WTC11 (cell line): ENCODE measurements at regions of chr2 and their contacts with region 1.

Region 1: DNA sequence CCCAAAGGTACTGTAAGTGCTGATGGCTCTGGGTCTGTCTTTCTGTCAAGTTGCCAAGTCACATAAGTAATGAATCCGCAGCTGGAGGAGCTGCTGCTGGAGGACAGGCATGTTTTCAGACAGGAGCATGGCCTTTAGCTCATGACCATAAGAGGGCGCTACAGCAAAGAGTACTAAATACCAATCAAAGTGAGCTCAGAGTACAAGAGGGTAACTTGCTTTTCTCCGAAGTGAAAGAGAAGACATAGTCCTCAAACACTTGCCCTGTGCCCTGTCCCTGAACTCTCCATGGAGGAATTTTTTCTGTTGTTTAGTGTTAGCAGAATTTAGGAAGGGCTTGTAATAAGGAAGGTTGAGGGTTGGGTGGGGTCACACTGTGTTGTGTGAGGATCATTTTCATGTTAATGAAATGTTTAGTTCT is 58.0 kb upstream of the EML6 start:
- DNase-seq: peak; percentile 65
- ATAC-seq: peak; percentile 94
- H3K4me3 Mint-ChIP-seq: no peak overlapping the region
- H3K27ac Mint-ChIP-seq: peak overlapping the region; percentile 76
- H3K4me1 Mint-ChIP-seq: peaks cover 9% of the 10 kb centered on the region
- H3K27me3 Mint-ChIP-seq: no peaks in the 10 kb centered on the region
- CTCF ChIP-seq: peak; percentile 74

Region 2: DNA sequence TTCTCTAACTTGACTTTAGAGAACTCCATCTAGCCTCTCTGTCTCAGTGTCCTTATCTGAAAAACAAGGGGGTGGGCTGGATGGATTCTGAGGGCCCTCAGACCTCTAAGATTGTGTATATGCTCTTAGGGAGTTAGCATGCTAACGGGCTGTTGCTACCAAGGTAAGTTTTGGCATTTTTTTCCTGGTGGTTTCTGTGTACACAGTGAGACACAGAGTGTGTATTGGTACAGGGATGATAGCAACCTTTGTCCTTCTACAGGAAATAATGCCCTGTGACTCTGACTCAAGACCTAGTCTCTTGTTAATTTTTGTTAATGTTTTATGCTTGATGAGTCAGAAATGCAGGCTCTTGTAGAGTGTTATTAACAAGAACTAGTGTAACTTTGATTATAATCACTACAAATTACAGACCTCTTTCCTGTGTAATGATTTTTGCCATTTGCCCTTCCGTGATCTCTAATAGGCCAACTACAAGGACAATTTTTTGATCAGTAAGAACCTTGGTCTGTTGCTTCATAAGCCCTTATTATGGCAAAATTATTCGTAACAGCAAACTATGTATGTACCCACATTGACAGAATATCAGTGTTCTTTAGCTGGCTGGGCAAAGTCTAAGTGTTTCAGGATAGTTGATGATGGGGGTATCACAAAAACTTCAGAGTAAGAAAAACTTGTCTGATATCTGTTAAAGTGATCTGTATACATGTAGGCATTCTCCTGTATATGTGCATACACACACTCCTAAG is 119.6 kb before region 1 on chr2:
- CTCF ChIA-PET with region 1: no interaction called
- POLR2A ChIA-PET with region 1: no interaction called
- DNase-seq: no peak
- ATAC-seq: no peak
- H3K4me3 Mint-ChIP-seq: no peak overlapping the region
- H3K27ac Mint-ChIP-seq: no peak overlapping the region
- H3K4me1 Mint-ChIP-seq: peaks cover 14% of the 10 kb centered on the region
- H3K27me3 Mint-ChIP-seq: no peaks in the 10 kb centered on the region
- CTCF ChIP-seq: no peak

Region 3: GRCh38 chr2:54558188-54559005 is 107.0 kb before region 1 on chr2:
- CTCF ChIA-PET with region 1: interaction called, 11 read pairs
- POLR2A ChIA-PET with region 1: no interaction called
- DNase-seq: peak; percentile 82
- ATAC-seq: peak; percentile 60
- H3K4me3 Mint-ChIP-seq: peak overlapping the region; percentile 91
- H3K27ac Mint-ChIP-seq: peak overlapping the region; percentile 95
- H3K4me1 Mint-ChIP-seq: peaks cover 43% of the 10 kb centered on the region
- H3K27me3 Mint-ChIP-seq: no peaks in the 10 kb centered on the region
- CTCF ChIP-seq: no peak

Region 4: GRCh38 chr2:54589340-54590215 is 75.9 kb before region 1 on chr2:
- CTCF ChIA-PET with region 1: no interaction called
- POLR2A ChIA-PET with region 1: no interaction called
- DNase-seq: no peak
- ATAC-seq: peak; percentile 50
- H3K4me3 Mint-ChIP-seq: no peak overlapping the region
- H3K27ac Mint-ChIP-seq: peak overlapping the region; percentile 16; the same call in 1 of the 2 replicates
- H3K4me1 Mint-ChIP-seq: peaks cover 50% of the 10 kb centered on the region
- H3K27me3 Mint-ChIP-seq: no peaks in the 10 kb centered on the region
- CTCF ChIP-seq: no peak

Region 5: GRCh38 chr2:54641988-54642387 is 23.5 kb before region 1 on chr2:
- CTCF ChIA-PET with region 1: interaction called, 13 read pairs
- POLR2A ChIA-PET with region 1: no interaction called
- DNase-seq: no peak
- ATAC-seq: no peak
- H3K4me3 Mint-ChIP-seq: no peak overlapping the region
- H3K27ac Mint-ChIP-seq: no peak overlapping the region; the same call in 1 of the 2 replicates
- H3K4me1 Mint-ChIP-seq: no peaks in the 10 kb centered on the region
- H3K27me3 Mint-ChIP-seq: no peaks in the 10 kb centered on the region
- CTCF ChIP-seq: no peak

Region 6: GRCh38 chr2:54691445-54692135 is 26.1 kb after region 1 on chr2:
- CTCF ChIA-PET with region 1: interaction called, 12 read pairs
- POLR2A ChIA-PET with region 1: no interaction called
- DNase-seq: no peak
- ATAC-seq: no peak
- H3K4me3 Mint-ChIP-seq: no peak overlapping the region
- H3K27ac Mint-ChIP-seq: no peak overlapping the region
- H3K4me1 Mint-ChIP-seq: no peaks in the 10 kb centered on the region
- H3K27me3 Mint-ChIP-seq: no peaks in the 10 kb centered on the region
- CTCF ChIP-seq: no peak

Region 7: DNA sequence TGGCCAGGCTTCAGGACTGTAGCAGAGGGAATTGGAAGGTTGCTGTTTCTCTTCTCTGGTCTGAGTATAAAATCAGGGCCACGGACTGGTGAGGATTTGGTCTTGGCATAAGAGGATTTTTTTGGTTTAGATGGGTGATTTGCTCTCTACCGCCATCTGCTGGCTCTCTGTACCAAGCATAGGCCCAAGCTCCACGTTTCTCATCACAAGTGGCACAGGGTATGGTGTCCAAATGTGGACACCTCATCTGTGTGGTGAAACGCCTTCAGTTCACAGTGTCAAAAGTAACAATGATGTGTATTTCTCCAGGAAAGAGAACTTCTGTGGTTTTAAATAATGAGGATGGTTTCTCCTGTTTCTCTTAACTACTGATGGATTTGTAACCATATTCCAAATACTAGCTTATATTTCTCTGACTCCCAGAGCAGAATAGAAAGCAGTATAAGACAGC is 173.2 kb after region 1 on chr2:
- CTCF ChIA-PET with region 1: interaction called, 41 read pairs
- POLR2A ChIA-PET with region 1: no interaction called
- DNase-seq: peak; percentile 62
- ATAC-seq: peak; percentile 87
- H3K4me3 Mint-ChIP-seq: no peak overlapping the region
- H3K27ac Mint-ChIP-seq: no peak overlapping the region
- H3K4me1 Mint-ChIP-seq: no peaks in the 10 kb centered on the region
- H3K27me3 Mint-ChIP-seq: no peaks in the 10 kb centered on the region
- CTCF ChIP-seq: peak; percentile 76